Naive thymus-derived CD4-positive, alpha-beta T cell (primary cell): ENCODE measurements at regions of chr1 and their contacts with region 1.

Region 1: GRCh38 chr1:108559215-108560186 is at the start of gene EEIG2:
- DNase-seq: peak; percentile 84 to 94 (median 91)
- ATAC-seq: peak; percentile 94
- H3K4me3 ChIP-seq: peak within 1 kb of the TSS; percentile 65
- H3K4me3 Mint-ChIP-seq: peak within 1 kb of the TSS in 9 of 10 donors; percentile 93 to 99 (median 96)
- H3K27ac ChIP-seq: peak within 1 kb of the TSS; percentile 68
- H3K27ac Mint-ChIP-seq: peak within 1 kb of the TSS; percentile 84 to 96 (median 91)
- H3K4me1 ChIP-seq: peaks cover 21 to 31% of the 10 kb centered on the region in 2 donors
- H3K4me1 Mint-ChIP-seq: peaks cover 22 to 38% (median 33%) of the 10 kb centered on the region in 7 donors
- H3K27me3 ChIP-seq: no peaks in the 10 kb centered on the region
- H3K27me3 Mint-ChIP-seq: peaks cover 0 to 10% (median 0%) of the 10 kb centered on the region in 5 donors
- total RNA-seq, gene EEIG2: 7.8 to 15.9 (median 10.9) TPM

Region 2: GRCh38 chr1:107963601-107964335 is 595.7 kb before region 1 on chr1:
- CTCF ChIA-PET with region 1: no interaction called
- POLR2A ChIA-PET with region 1: no interaction called
- intact Hi-C with region 1: loop called in 1 of 2 experiments (anchors 1 kb)
- DNase-seq: peak; percentile 27 to 70 (median 62)
- ATAC-seq: peak; percentile 79
- H3K4me3 ChIP-seq: peak overlapping the region; percentile 87
- H3K4me3 Mint-ChIP-seq: peak overlapping the region; percentile 91 to 99 (median 98)
- H3K27ac ChIP-seq: peak overlapping the region; percentile 67
- H3K27ac Mint-ChIP-seq: peak overlapping the region; percentile 79 to 98 (median 92)
- H3K4me1 ChIP-seq: peaks cover 11% of the 10 kb centered on the region in 2 donors
- H3K4me1 Mint-ChIP-seq: peaks cover 15 to 43% (median 27%) of the 10 kb centered on the region in 7 donors
- H3K27me3 ChIP-seq: no peaks in the 10 kb centered on the region
- H3K27me3 Mint-ChIP-seq: peaks cover 0 to 3% (median 0%) of the 10 kb centered on the region in 5 donors

Region 3: GRCh38 chr1:108209430-108210108 is 349.9 kb before region 1 on chr1:
- CTCF ChIA-PET with region 1: no interaction called
- POLR2A ChIA-PET with region 1: no interaction called
- intact Hi-C with region 1: loop called in 1 of 2 experiments (anchors 2 kb)
- DNase-seq: no peak
- ATAC-seq: no peak
- H3K4me3 ChIP-seq: no peak overlapping the region
- H3K4me3 Mint-ChIP-seq: no peak overlapping the region
- H3K27ac ChIP-seq: no peak overlapping the region
- H3K27ac Mint-ChIP-seq: no peak overlapping the region
- H3K4me1 ChIP-seq: no peaks in the 10 kb centered on the region
- H3K4me1 Mint-ChIP-seq: peaks cover 0 to 12% (median 0%) of the 10 kb centered on the region in 7 donors
- H3K27me3 ChIP-seq: peaks cover 0 to 3% of the 10 kb centered on the region in 2 donors
- H3K27me3 Mint-ChIP-seq: peaks cover 18 to 74% (median 38%) of the 10 kb centered on the region in 5 donors

Region 4: DNA sequence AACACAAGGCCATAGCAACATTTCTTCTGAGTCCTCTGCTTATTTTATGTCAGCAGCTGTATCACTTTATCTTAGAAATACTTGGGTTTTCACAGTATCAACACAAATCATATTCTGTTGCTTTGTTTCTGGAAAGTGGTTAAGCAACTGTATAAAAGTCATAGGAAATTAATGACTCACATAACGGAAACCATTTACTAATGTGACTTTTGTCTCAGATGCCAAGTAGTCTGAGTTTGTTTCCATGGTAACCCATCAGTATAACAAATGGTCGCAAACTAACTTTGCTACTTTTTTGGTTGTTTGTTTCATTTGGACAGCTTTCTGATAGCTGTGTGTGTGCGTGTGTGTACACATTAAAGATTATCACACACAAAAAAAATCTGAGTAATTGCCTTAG is 31.5 kb after region 1 on chr1:
- CTCF ChIA-PET with region 1: no interaction called
- POLR2A ChIA-PET with region 1: no interaction called
- intact Hi-C with region 1: loop called (anchors 1 kb)
- DNase-seq: peak in 7 of 9 donors; percentile 4 to 55 (median 43)
- ATAC-seq: peak; percentile 87
- H3K4me3 ChIP-seq: no peak overlapping the region
- H3K4me3 Mint-ChIP-seq: no peak overlapping the region
- H3K27ac ChIP-seq: no peak overlapping the region
- H3K27ac Mint-ChIP-seq: peak overlapping the region in 2 of 9 donors; percentile 28 to 63
- H3K4me1 ChIP-seq: peaks cover 0 to 22% of the 10 kb centered on the region in 2 donors
- H3K4me1 Mint-ChIP-seq: peaks cover 19 to 49% (median 45%) of the 10 kb centered on the region in 7 donors
- H3K27me3 ChIP-seq: no peaks in the 10 kb centered on the region
- H3K27me3 Mint-ChIP-seq: no peaks in the 10 kb centered on the region

Region 5: GRCh38 chr1:108708691-108709660 is 149.5 kb after region 1 on chr1:
- CTCF ChIA-PET with region 1: interaction called, 4 read pairs
- POLR2A ChIA-PET with region 1: interaction called, 5 read pairs
- intact Hi-C with region 1: loop called in 1 of 2 experiments (anchors 5 kb)
- DNase-seq: peak; percentile 24 to 65 (median 54)
- ATAC-seq: peak; percentile 87
- H3K4me3 ChIP-seq: no peak overlapping the region
- H3K4me3 Mint-ChIP-seq: peak overlapping the region in 2 of 10 donors; percentile 15 to 38
- H3K27ac ChIP-seq: no peak overlapping the region
- H3K27ac Mint-ChIP-seq: peak overlapping the region in 3 of 9 donors; percentile 1 to 38 (median 2)
- H3K4me1 ChIP-seq: peaks cover 21 to 24% of the 10 kb centered on the region in 2 donors
- H3K4me1 Mint-ChIP-seq: peaks cover 7 to 44% (median 33%) of the 10 kb centered on the region in 7 donors
- H3K27me3 ChIP-seq: no peaks in the 10 kb centered on the region
- H3K27me3 Mint-ChIP-seq: peaks cover 0 to 20% (median 0%) of the 10 kb centered on the region in 5 donors

Region 6: DNA sequence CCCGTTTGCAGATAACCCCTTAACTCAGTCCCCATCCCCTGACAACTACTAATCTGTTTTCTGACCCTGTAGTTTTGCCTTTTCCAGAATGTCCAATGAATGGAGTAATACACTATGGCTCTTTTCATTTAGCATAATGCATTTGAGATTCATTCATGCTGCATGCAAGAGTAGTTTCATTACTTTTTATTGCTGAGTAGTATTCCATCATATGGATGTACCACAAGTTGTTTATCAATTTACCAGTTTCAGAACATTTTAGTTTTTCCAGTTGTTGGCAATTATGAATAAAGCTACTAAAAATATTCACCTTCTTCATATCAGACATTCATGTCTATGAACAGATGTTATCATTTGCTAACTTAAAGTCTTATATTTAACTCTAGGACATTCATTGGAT is 232.3 kb after region 1 on chr1:
- CTCF ChIA-PET with region 1: no interaction called
- POLR2A ChIA-PET with region 1: no interaction called
- intact Hi-C with region 1: no loop called
- DNase-seq: no peak
- ATAC-seq: no peak
- H3K4me3 ChIP-seq: no peak overlapping the region
- H3K4me3 Mint-ChIP-seq: no peak overlapping the region
- H3K27ac ChIP-seq: no peak overlapping the region
- H3K27ac Mint-ChIP-seq: peak overlapping the region in 1 of 9 donors; percentile 10
- H3K4me1 ChIP-seq: no peaks in the 10 kb centered on the region
- H3K4me1 Mint-ChIP-seq: peaks cover 0 to 5% (median 0%) of the 10 kb centered on the region in 7 donors
- H3K27me3 ChIP-seq: no peaks in the 10 kb centered on the region
- H3K27me3 Mint-ChIP-seq: no peaks in the 10 kb centered on the region

Region 7: GRCh38 chr1:108963052-108963686 is 403.7 kb after region 1 on chr1 and contains the start of gene CLCC1:
- CTCF ChIA-PET with region 1: no interaction called
- POLR2A ChIA-PET with region 1: no interaction called
- intact Hi-C with region 1: loop called in 1 of 2 experiments (anchors 5 kb)
- DNase-seq: peak; percentile 78 to 92 (median 89)
- ATAC-seq: peak; percentile 97
- H3K4me3 ChIP-seq: peak within 1 kb of the TSS; percentile 76
- H3K4me3 Mint-ChIP-seq: peak within 1 kb of the TSS; percentile 87 to 94 (median 90)
- H3K27ac ChIP-seq: peak within 1 kb of the TSS; percentile 85
- H3K27ac Mint-ChIP-seq: peak within 1 kb of the TSS; percentile 78 to 97 (median 92)
- H3K4me1 ChIP-seq: peaks cover 11 to 16% of the 10 kb centered on the region in 2 donors
- H3K4me1 Mint-ChIP-seq: peaks cover 21 to 48% (median 37%) of the 10 kb centered on the region in 7 donors
- H3K27me3 ChIP-seq: no peaks in the 10 kb centered on the region
- H3K27me3 Mint-ChIP-seq: peaks cover 0 to 15% (median 0%) of the 10 kb centered on the region in 5 donors
- total RNA-seq, gene CLCC1: 15.4 to 34.6 (median 25.2) TPM

Region 8: GRCh38 chr1:109191377-109191776 is 631.9 kb after region 1 on chr1:
- CTCF ChIA-PET with region 1: no interaction called
- POLR2A ChIA-PET with region 1: no interaction called
- intact Hi-C with region 1: no loop called
- DNase-seq: no peak
- ATAC-seq: no peak
- H3K4me3 ChIP-seq: no peak overlapping the region
- H3K4me3 Mint-ChIP-seq: no peak overlapping the region
- H3K27ac ChIP-seq: no peak overlapping the region
- H3K27ac Mint-ChIP-seq: no peak overlapping the region
- H3K4me1 ChIP-seq: no peaks in the 10 kb centered on the region
- H3K4me1 Mint-ChIP-seq: peaks cover 0 to 11% (median 4%) of the 10 kb centered on the region in 7 donors
- H3K27me3 ChIP-seq: no peaks in the 10 kb centered on the region
- H3K27me3 Mint-ChIP-seq: no peaks in the 10 kb centered on the region